GM12878 (cell line): ENCODE measurements at regions of chr1 and their contacts with region 1.

Region 1: GRCh38 chr1:206544562-206545257 is 37.4 kb downstream of the RASSF5 start:
- DNase-seq: no peak
- ATAC-seq: peak; percentile 98
- H3K4me3 ChIP-seq: no peak overlapping the region
- H3K27ac ChIP-seq: no peak overlapping the region
- H3K4me1 ChIP-seq: no peaks in the 10 kb centered on the region; the same call in 1 of the 2 replicates
- H3K27me3 ChIP-seq: no peaks in the 10 kb centered on the region
- CTCF ChIP-seq: peak; percentile 86 to 91 (median 88)
- EP300 ChIP-seq: no peak
- POLR2A ChIP-seq: no peak
- RAD21 ChIP-seq: peak; percentile 98

Region 2: DNA sequence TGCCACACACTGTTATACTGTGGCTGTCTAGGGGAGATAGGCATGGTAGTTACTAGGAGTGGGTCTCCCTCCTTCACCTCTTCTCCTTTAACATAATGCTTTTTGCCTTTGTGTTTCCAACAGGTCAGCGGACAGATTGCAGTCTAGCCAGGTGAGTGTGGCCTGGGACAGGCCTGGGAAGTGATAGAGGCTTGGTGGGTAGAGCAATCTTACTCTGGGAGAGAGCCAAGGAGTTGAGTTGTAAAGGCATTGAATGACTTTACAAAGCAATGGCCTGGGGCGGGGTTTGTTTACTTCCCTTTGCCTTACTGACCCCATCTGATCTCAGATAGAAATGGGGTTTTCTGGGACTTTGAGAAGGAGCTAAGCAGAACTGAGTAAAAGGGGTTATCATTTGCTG is 125.5 kb before region 1 on chr1:
- CTCF ChIA-PET with region 1: no interaction called
- POLR2A ChIA-PET with region 1: no interaction called
- RAD21 ChIA-PET with region 1: no interaction called
- SMC1A ChIA-PET with region 1: no interaction called
- in situ Hi-C with region 1: no loop called
- intact Hi-C with region 1: no loop called
- DNase-seq: no peak
- ATAC-seq: no peak
- H3K4me3 ChIP-seq: no peak overlapping the region
- H3K27ac ChIP-seq: no peak overlapping the region
- H3K4me1 ChIP-seq: no peaks in the 10 kb centered on the region
- H3K27me3 ChIP-seq: no peaks in the 10 kb centered on the region
- CTCF ChIP-seq: no peak
- EP300 ChIP-seq: no peak
- POLR2A ChIP-seq: no peak
- RAD21 ChIP-seq: no peak

Region 3: GRCh38 chr1:206469933-206470691 is 74.6 kb before region 1 on chr1 and contains the start of gene IKBKE:
- CTCF ChIA-PET with region 1: interaction called, 21 read pairs
- POLR2A ChIA-PET with region 1: interaction called, 3 read pairs
- RAD21 ChIA-PET with region 1: interaction called, 17 read pairs
- SMC1A ChIA-PET with region 1: interaction called, 7 read pairs
- in situ Hi-C with region 1: no loop called
- intact Hi-C with region 1: no loop called
- DNase-seq: no peak
- ATAC-seq: peak; percentile 73
- H3K4me3 ChIP-seq: peak within 1 kb of the TSS; percentile 94
- H3K27ac ChIP-seq: peak within 1 kb of the TSS; percentile 88
- H3K4me1 ChIP-seq: peaks cover 66% of the 10 kb centered on the region
- H3K27me3 ChIP-seq: no peaks in the 10 kb centered on the region
- CTCF ChIP-seq: peak; percentile 7 to 22 (median 17); a peak in 1 of 6 replicates
- EP300 ChIP-seq: no peak
- POLR2A ChIP-seq: peak; percentile 68
- RAD21 ChIP-seq: no peak
- polyA plus RNA-seq, gene IKBKE: 12.8 to 19.2 TPM

Region 4: DNA sequence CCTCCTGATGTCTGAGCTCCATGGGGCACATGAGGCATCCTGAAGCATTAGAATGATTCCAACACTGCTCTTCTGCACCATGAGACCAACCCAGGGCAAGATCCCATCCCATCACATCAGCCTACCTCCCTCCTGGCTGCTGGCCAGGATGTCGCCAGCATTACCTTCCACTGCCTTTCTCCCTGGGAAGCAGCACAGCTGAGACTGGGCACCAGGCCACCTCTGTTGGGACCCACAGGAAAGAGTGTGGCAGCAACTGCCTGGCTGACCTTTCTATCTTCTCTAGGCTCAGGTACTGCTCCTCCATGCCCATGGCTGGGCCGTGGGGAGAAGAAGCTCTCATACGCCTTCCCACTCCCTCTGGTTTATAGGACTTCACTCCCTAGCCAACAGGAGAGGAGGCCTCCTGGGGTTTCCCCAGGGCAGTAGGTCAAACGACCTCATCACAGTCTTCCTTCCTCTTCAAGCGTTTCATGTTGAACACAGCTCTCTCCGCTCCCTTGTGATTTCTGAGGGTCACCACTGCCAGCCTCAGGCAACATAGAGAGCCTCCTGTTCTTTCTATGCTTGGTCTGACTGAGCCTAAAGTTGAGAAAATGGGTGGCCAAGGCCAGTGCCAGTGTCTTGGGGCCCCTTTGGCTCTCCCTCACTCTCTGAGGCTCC is 48.4 kb before region 1 on chr1:
- CTCF ChIA-PET with region 1: interaction called, 55 read pairs
- POLR2A ChIA-PET with region 1: interaction called, 6 read pairs
- RAD21 ChIA-PET with region 1: interaction called, 23 read pairs
- SMC1A ChIA-PET with region 1: interaction called, 16 read pairs
- in situ Hi-C with region 1: no loop called
- intact Hi-C with region 1: no loop called
- DNase-seq: no peak
- ATAC-seq: peak; percentile 88
- H3K4me3 ChIP-seq: peak overlapping the region; percentile 34; the same call in 1 of the 2 replicates
- H3K27ac ChIP-seq: peak overlapping the region; percentile 90
- H3K4me1 ChIP-seq: peaks cover 39% of the 10 kb centered on the region
- H3K27me3 ChIP-seq: no peaks in the 10 kb centered on the region
- CTCF ChIP-seq: no peak
- EP300 ChIP-seq: 0 out of 4 replicates have a peak, but pooled peaks of 1 of the 2 experiments have one; percentile 29
- POLR2A ChIP-seq: no peak
- RAD21 ChIP-seq: no peak

Region 5: DNA sequence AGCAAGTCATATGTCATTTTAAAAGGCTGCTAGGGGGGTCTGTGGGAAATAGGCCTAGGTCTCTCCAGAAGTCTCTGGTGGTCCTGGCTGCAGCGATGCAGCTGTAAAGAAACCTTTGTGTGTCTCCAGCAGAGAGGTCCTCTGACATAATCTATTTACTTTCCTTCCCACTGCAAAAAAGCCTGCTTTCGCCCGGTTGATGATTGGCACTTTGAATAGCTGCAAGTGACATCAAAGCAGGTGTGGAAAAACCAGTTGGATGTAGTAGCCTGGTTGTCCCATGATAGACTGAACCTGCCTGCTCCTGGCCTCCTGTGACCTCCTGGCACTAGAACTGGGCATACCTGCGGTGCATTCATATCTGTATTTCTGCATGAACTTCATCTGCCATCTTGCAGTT is 23.6 kb before region 1 on chr1:
- CTCF ChIA-PET with region 1: interaction called, 10 read pairs
- POLR2A ChIA-PET with region 1: no interaction called
- RAD21 ChIA-PET with region 1: interaction called, 9 read pairs
- SMC1A ChIA-PET with region 1: interaction called, 9 read pairs
- in situ Hi-C with region 1: no loop called
- intact Hi-C with region 1: no loop called
- DNase-seq: no peak
- ATAC-seq: no peak
- H3K4me3 ChIP-seq: no peak overlapping the region
- H3K27ac ChIP-seq: no peak overlapping the region
- H3K4me1 ChIP-seq: peaks cover 4% of the 10 kb centered on the region; the same call in 1 of the 2 replicates
- H3K27me3 ChIP-seq: no peaks in the 10 kb centered on the region
- CTCF ChIP-seq: no peak
- EP300 ChIP-seq: no peak
- POLR2A ChIP-seq: no peak
- RAD21 ChIP-seq: no peak

Region 6: GRCh38 chr1:206575165-206575893 is 30.6 kb after region 1 on chr1:
- CTCF ChIA-PET with region 1: interaction called, 440 read pairs
- POLR2A ChIA-PET with region 1: interaction called, 12 read pairs
- RAD21 ChIA-PET with region 1: interaction called, 46 read pairs
- SMC1A ChIA-PET with region 1: interaction called, 311 read pairs
- in situ Hi-C with region 1: loop called (anchors 5 kb)
- intact Hi-C with region 1: no loop called
- DNase-seq: no peak
- ATAC-seq: peak; percentile 57
- H3K4me3 ChIP-seq: peak overlapping the region; percentile 66
- H3K27ac ChIP-seq: peak overlapping the region; percentile 92
- H3K4me1 ChIP-seq: peaks cover 62% of the 10 kb centered on the region
- H3K27me3 ChIP-seq: no peaks in the 10 kb centered on the region
- CTCF ChIP-seq: no peak
- EP300 ChIP-seq: 0 out of 4 replicates have a peak, but pooled peaks of 1 of the 2 experiments have one; percentile 8
- POLR2A ChIP-seq: no peak
- RAD21 ChIP-seq: no peak

Region 7: DNA sequence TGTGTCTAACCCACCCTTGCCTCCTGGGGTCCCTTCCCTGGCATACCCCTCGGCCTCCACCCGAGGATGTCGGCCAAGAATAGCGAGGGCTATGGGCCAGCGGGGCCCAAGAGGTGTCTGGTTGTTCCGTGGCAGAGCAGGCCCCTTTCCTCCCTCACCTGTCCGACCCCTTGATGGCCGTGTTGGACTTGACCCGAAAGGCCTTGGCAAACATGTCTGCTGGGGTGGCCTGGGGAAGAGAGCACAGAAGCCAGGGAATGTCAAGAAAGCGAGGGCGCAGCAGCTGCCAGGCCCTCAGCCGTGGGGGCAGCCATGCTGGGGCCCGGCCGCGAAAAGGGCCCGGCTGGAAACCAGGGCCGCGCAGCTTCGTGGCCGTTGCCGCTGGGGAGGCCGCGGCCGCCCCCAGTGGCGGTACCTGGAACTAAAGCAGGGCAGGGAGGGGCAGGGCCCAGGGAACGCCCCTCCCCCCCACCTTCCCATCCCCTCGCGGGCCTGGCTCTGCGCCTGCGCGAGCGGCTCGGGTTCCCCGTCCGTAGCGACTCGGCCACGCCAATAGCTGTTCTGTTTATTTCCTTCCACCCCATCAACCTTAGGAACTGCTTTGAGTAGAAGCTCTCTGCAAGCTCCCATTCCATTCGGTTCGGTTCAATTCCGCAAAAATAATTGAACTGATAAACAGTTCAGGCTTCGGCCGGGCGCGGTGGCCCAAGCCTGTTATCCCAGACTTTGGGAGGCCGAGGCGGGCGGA is 67.6 kb after region 1 on chr1 and contains the start of gene EIF2D:
- CTCF ChIA-PET with region 1: interaction called, 18 read pairs
- POLR2A ChIA-PET with region 1: interaction called, 9 read pairs
- RAD21 ChIA-PET with region 1: interaction called, 18 read pairs
- SMC1A ChIA-PET with region 1: interaction called, 9 read pairs
- in situ Hi-C with region 1: no loop called
- intact Hi-C with region 1: no loop called
- DNase-seq: peak; percentile 58
- ATAC-seq: peak; percentile 82
- H3K4me3 ChIP-seq: peak within 1 kb of the TSS; percentile 83
- H3K27ac ChIP-seq: peak within 1 kb of the TSS; percentile 80
- H3K4me1 ChIP-seq: peaks cover 23% of the 10 kb centered on the region
- H3K27me3 ChIP-seq: no peaks in the 10 kb centered on the region
- CTCF ChIP-seq: peak; percentile 96 to 99 (median 98); a peak in 5 of 6 replicates
- EP300 ChIP-seq: peak in 1 of 2 experiments; percentile 37; a peak in 1 of 4 replicates
- POLR2A ChIP-seq: peak; percentile 100
- RAD21 ChIP-seq: peak; percentile 59
- polyA plus RNA-seq, gene EIF2D: 65.4 to 77.5 TPM